ENCODE measurements at regions of chr3 and their contacts with region 1.

Region 1: GRCh38 chr3:194306109-194306686 is 44.9 kb downstream of the CPN2 start:
- DNase-seq: peak; percentile 67
- H3K4me3 Mint-ChIP-seq: no peak overlapping the region
- H3K27ac Mint-ChIP-seq: peak overlapping the region; percentile 86
- H3K4me1 Mint-ChIP-seq: peaks cover 59% of the 10 kb centered on the region
- H3K27me3 Mint-ChIP-seq: peaks cover 3% of the 10 kb centered on the region

Region 2: DNA sequence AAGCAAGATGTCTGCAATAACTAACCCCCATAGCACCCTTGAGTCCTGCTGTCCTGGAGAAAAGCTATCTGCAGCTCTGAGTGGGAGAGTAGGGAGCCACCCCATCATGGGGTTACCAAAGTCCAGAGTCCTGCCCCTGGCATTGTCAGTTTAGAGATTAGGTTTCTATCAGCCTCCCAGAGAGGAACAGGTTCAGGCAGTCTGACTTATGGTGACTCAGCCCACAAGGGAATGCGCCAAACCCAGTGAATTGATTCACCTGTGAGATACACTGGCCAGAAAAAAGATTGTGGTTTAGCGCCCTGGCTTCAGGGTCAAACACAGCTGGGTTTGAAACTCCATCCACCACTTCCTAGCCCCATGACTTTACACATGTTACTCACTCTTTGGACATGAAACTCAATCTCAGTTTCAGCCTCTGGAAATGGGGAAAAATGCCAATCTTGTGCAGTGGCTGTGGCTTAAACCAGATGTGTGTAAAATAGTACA is 433.9 kb before region 1 on chr3:
- intact Hi-C with region 1: loop called (anchors 5 kb)
- DNase-seq: no peak
- H3K4me3 Mint-ChIP-seq: no peak overlapping the region
- H3K27ac Mint-ChIP-seq: no peak overlapping the region
- H3K4me1 Mint-ChIP-seq: peaks cover 13% of the 10 kb centered on the region
- H3K27me3 Mint-ChIP-seq: peaks cover 50% of the 10 kb centered on the region

Region 3: GRCh38 chr3:193960487-193961274 is 345.5 kb before region 1 on chr3:
- intact Hi-C with region 1: loop called (anchors 2 kb)
- DNase-seq: no peak
- H3K4me3 Mint-ChIP-seq: no peak overlapping the region
- H3K27ac Mint-ChIP-seq: no peak overlapping the region
- H3K4me1 Mint-ChIP-seq: peaks cover 24% of the 10 kb centered on the region
- H3K27me3 Mint-ChIP-seq: peaks cover 58% of the 10 kb centered on the region

Region 4: DNA sequence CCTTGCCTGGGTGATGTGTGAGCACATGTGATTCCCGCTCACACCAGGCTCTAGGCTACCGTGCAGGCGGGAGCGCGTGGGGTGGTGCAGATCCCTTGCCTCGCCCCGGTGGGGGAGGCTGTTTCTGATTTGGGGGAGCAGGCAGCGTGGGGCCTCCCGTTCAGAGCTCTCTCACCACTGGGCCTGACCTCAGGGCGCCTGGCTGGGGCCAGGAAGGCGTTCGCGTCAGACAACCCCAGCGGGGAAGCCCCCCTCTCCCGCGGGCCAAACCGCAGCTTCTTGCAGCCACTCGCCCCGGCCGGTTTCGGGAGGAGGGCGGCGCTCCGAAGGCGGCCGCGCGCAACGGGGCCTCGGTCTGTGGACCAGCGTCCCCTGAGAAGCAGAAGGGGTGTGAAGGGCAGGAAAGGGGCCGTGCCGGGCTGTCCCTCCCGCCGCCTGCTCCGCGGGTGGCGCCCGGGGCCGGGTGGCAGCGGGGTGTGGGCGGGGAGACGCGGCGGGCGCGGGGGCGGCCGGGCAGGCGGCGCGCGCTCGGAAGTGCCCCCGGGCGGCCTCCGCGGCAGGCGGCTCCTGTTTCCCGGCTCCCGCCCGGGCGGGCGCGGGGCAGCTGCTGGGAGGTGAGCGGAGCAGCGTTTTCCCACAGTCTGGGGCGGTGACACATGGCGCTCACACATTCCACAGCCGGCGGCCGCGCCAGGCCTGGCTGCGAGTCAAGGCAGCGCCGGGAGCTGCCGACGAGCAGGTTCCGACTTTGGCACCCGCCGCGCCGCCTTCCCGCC is 235.4 kb before region 1 on chr3:
- intact Hi-C with region 1: loop called (anchors 5 kb)
- DNase-seq: peak; percentile 40
- H3K4me3 Mint-ChIP-seq: peak overlapping the region; percentile 50
- H3K27ac Mint-ChIP-seq: no peak overlapping the region
- H3K4me1 Mint-ChIP-seq: peaks cover 21% of the 10 kb centered on the region
- H3K27me3 Mint-ChIP-seq: peaks cover 72% of the 10 kb centered on the region

Region 5: GRCh38 chr3:194204042-194204987 is 101.9 kb before region 1 on chr3:
- intact Hi-C with region 1: loop called (anchors 10 kb)
- DNase-seq: no peak
- H3K4me3 Mint-ChIP-seq: peak overlapping the region; percentile 67
- H3K27ac Mint-ChIP-seq: no peak overlapping the region
- H3K4me1 Mint-ChIP-seq: peaks cover 20% of the 10 kb centered on the region
- H3K27me3 Mint-ChIP-seq: peaks cover 36% of the 10 kb centered on the region

Region 6: GRCh38 chr3:194255252-194256039 is 50.8 kb before region 1 on chr3:
- intact Hi-C with region 1: loop called (anchors 2 kb)
- DNase-seq: peak; percentile 69
- H3K4me3 Mint-ChIP-seq: peak overlapping the region; percentile 43
- H3K27ac Mint-ChIP-seq: peak overlapping the region; percentile 61
- H3K4me1 Mint-ChIP-seq: peaks cover 38% of the 10 kb centered on the region
- H3K27me3 Mint-ChIP-seq: peaks cover 2% of the 10 kb centered on the region

Region 7: GRCh38 chr3:194323785-194324735 is 17.9 kb after region 1 on chr3:
- intact Hi-C with region 1: loop called (anchors 2 kb)
- DNase-seq: no peak
- H3K4me3 Mint-ChIP-seq: no peak overlapping the region
- H3K27ac Mint-ChIP-seq: no peak overlapping the region
- H3K4me1 Mint-ChIP-seq: peaks cover 5% of the 10 kb centered on the region
- H3K27me3 Mint-ChIP-seq: peaks cover 22% of the 10 kb centered on the region

Measured in activated T-helper 2 cell treated with anti-CD3 and anti-CD28 coated beads, Interferon-gamma antibody, Interleukin-2, Interleukin-4, amounts not matched to agents 10 μg/mL and 5 μg/mL and 100 μg/mL, durations not matched to agents 14 hours and 24 hours and 36 hours (primary cell).